ENCODE measurements at regions of chr6 and their contacts with region 1.

Region 1: GRCh38 chr6:139028658-139029469 is at the start of gene ABRACL:
- DNase-seq: peak; percentile 83
- ATAC-seq: peak; percentile 79
- total RNA-seq, gene ABRACL: 7.9 TPM

Region 2: GRCh38 chr6:138970856-138971425 is 57.9 kb before region 1 on chr6:
- intact Hi-C with region 1: no loop called
- DNase-seq: no peak
- ATAC-seq: peak; percentile 80

Region 3: DNA sequence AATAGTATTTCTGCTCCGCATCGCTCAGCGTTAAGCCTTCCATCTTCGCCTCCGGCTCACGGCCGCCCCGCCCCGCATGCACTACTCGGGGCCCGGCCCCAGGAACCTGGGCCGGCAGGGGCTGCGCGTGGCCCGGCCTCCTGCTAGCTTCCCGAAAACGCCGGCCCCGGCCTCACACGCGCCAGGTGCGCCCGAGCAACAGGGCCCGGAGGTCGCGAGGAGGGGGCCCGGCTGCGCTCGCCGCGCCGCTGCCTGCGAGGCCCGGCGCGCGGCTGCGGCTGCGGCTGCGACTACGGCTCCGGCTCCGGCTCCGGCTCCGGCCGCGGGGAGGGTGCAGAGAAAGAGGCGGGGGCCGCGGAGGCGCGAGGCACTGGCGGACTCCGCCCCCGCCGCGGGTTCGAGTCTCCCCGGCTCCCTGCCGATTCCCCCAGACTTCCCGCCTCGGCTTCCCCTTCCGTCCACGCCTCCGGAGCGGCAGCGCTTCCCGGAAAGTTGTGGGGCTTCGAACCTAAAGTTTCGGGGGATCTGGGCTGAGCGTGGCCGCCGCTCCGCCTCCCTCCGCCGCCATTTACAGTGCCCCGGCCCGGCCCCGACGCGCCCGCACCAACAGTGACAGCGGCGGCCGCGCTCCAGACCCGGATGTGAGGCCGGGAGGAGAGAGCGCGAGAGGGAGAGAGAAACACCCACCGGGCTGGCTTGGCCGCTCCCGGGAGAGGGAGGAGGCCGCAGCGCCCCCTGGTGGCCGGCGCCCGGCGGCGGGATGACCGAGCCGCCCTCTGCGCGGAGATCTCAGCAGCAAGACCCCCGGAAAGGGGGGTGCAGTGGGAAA is 41.0 kb before region 1 on chr6 and contains the start of gene REPS1:
- intact Hi-C with region 1: loop called (anchors 5 kb)
- DNase-seq: peak; percentile 97
- ATAC-seq: peak; percentile 96
- total RNA-seq, gene REPS1: 31.1 TPM

Region 4: DNA sequence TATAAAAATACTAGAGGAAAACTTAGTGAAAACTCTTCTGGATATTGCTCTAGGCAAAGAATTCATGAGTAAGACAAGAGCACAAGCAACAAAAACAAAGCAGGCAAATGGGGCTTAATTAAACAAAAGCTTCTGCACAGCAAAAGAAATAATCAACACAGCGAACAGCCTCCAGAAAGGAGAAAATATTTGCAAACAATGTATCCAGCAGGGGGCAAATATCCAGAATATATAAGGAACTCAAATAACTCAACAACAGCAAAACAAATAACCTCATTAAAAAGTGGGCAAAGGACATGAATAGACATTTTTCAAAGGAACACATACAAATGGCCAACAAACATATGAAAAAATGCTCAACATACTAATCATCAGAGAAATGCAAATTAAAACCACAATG is 88.9 kb after region 1 on chr6:
- intact Hi-C with region 1: loop called (anchors 10 kb)
- DNase-seq: no peak
- ATAC-seq: no peak